Naive thymus-derived CD4-positive, alpha-beta T cell (primary cell): ENCODE measurements at regions of chr3 and their contacts with region 1.

Region 1: DNA sequence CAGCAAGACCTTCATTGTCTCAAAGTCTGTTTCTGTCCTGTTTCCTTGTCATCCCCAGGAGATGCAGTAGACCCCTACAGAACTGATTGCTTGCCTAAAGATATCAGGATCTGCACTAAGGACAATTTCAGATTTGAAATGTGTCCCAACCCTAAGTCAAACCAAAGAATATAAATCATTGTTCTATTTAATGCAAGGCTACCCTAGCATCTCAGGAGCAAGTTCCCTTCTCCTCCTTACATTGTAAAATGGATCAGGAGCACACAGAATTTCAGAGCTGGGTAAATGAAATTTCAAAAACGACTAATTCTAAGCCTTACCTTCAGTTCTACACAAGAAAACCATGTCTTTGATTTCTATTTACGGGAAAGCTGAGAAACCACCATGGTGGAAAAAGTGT is 360.9 kb upstream of the KCNH8 start:
- DNase-seq: peak in 2 of 9 donors; percentile 16 to 31
- ATAC-seq: no peak
- H3K4me3 ChIP-seq: no peak overlapping the region
- H3K4me3 Mint-ChIP-seq: no peak overlapping the region
- H3K27ac ChIP-seq: no peak overlapping the region
- H3K27ac Mint-ChIP-seq: peak overlapping the region in 2 of 9 donors; percentile 44 to 48
- H3K4me1 ChIP-seq: no peaks in the 10 kb centered on the region
- H3K4me1 Mint-ChIP-seq: peaks cover under 1 to 34% (median 10%) of the 10 kb centered on the region in 7 donors
- H3K27me3 ChIP-seq: no peaks in the 10 kb centered on the region
- H3K27me3 Mint-ChIP-seq: no peaks in the 10 kb centered on the region

Region 2: DNA sequence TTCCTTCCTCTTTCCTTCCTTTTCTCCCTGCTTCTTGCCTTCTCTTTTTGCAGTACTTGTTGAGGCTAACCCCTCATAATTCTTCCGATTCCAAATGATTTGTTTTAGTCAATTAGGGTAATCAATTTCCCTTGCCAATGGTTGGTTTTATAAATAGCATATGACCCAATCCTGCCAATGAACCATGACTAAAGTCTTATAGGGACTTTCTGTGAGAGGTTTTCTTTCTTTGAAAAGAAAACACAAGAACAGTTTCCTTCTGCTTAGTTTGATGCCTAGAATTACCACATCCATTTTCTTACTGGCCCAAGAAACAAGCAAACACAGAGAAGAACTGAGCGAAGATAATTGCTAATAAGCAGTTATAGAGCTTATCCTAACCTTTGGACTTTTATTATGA is 69.8 kb before region 1 on chr3:
- CTCF ChIA-PET with region 1: interaction called, 3 read pairs
- POLR2A ChIA-PET with region 1: interaction called, 4 read pairs
- intact Hi-C with region 1: loop called in 1 of 2 experiments (anchors 2 kb)
- DNase-seq: peak in 1 of 9 donors; percentile 14
- ATAC-seq: no peak
- H3K4me3 ChIP-seq: no peak overlapping the region
- H3K4me3 Mint-ChIP-seq: peak overlapping the region in 8 of 10 donors; percentile 28 to 78 (median 60)
- H3K27ac ChIP-seq: no peak overlapping the region
- H3K27ac Mint-ChIP-seq: peak overlapping the region; percentile 20 to 95 (median 77)
- H3K4me1 ChIP-seq: peaks cover 43 to 50% of the 10 kb centered on the region in 2 donors
- H3K4me1 Mint-ChIP-seq: peaks cover 50 to 85% (median 71%) of the 10 kb centered on the region in 7 donors
- H3K27me3 ChIP-seq: no peaks in the 10 kb centered on the region
- H3K27me3 Mint-ChIP-seq: no peaks in the 10 kb centered on the region

Region 3: GRCh38 chr3:18830087-18830486 is 42.6 kb after region 1 on chr3:
- CTCF ChIA-PET with region 1: no interaction called
- POLR2A ChIA-PET with region 1: interaction called, 3 read pairs
- intact Hi-C with region 1: loop called (anchors 2 kb)
- DNase-seq: peak in 3 of 9 donors; percentile 25 to 41 (median 34)
- ATAC-seq: no peak
- H3K4me3 ChIP-seq: no peak overlapping the region
- H3K4me3 Mint-ChIP-seq: peak overlapping the region in 1 of 10 donors; percentile 48
- H3K27ac ChIP-seq: no peak overlapping the region
- H3K27ac Mint-ChIP-seq: no peak overlapping the region
- H3K4me1 ChIP-seq: peaks cover 0 to 8% of the 10 kb centered on the region in 2 donors
- H3K4me1 Mint-ChIP-seq: peaks cover 0 to 31% (median 20%) of the 10 kb centered on the region in 7 donors
- H3K27me3 ChIP-seq: no peaks in the 10 kb centered on the region
- H3K27me3 Mint-ChIP-seq: no peaks in the 10 kb centered on the region